H1 (cell line): ENCODE measurements at regions of chr6 and their contacts with region 1.

Region 1: DNA sequence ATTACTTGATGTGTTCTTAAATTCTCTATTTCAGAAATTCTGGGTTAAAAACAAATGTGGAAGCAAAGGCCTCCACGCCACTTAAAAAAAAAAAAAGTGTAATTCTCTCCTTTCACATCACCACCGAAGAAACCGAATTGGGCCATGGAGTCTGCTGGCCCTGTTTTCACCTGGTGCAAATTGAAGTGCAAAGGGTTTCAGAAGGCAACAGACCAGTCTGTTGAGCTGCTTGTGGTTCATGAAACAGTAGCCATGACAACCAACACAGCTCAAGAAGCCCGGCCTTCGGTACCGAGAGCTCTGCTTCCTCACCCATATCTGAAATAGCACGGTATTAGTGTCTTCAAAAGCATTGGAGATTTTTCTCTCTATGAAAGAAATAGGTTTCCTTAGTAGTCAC is 63.1 kb downstream of the GMPR start:
- DNase-seq: no peak
- H3K4me3 ChIP-seq: no peak overlapping the region
- H3K27ac ChIP-seq: no peak overlapping the region
- H3K4me1 ChIP-seq: peaks cover 0 to 18% (median 12%) of the 10 kb centered on the region in 4 experiments; a peak in 6 of 7 replicates
- H3K27me3 ChIP-seq: no peaks in the 10 kb centered on the region
- CTCF ChIP-seq: no peak
- EP300 ChIP-seq: no peak
- POLR2A ChIP-seq: no peak
- RAD21 ChIP-seq: no peak

Region 2: DNA sequence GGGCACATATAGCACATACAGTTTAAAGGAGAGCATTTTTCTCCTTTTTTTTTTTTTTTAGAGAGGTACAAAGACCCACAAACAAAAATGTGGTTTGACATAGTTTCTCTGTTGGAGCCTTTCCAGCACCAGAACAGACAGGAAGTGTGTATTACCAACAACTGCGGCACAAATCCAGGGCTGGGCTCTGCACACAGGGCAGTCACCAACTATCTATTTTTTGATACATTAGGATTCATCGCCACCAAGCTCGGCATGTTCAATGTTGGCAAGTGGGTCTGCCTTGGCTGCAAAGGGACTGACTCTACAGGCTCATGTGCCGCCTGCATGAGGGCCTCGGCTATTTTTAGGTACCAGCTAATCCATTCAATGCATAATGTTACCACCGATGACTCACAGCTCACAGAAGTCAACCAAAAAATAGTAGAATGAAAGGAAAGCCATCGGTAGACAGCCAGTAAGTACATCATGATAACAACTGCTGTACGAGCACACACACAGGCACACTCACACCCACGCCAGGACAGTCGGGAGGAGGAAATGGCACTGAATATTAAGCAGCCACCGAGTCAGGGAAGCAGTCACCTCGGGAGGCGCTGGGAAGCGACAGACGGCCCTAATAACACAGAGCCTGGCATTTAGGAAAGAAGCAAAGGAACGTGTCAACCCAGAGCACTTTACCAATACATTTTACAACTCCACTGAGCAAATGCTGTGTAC is 18.5 kb after region 1 on chr6:
- CTCF ChIA-PET with region 1: interaction called, 10 read pairs
- POLR2A ChIA-PET with region 1: no interaction called
- DNase-seq: no peak
- H3K4me3 ChIP-seq: no peak overlapping the region
- H3K27ac ChIP-seq: no peak overlapping the region
- H3K4me1 ChIP-seq: peaks cover 6 to 14% (median 12%) of the 10 kb centered on the region in 4 experiments
- H3K27me3 ChIP-seq: no peaks in the 10 kb centered on the region
- CTCF ChIP-seq: no peak
- EP300 ChIP-seq: no peak
- POLR2A ChIP-seq: no peak
- RAD21 ChIP-seq: no peak